Caco-2 (cell line): ENCODE measurements at regions of chr12 and their contacts with region 1.

Region 1: GRCh38 chr12:56224102-56224701 is at the start of gene NABP2:
- DNase-seq: peak; percentile 98
- H3K4me3 ChIP-seq: peak within 1 kb of the TSS; percentile 72
- H3K4me3 Mint-ChIP-seq: peak within 1 kb of the TSS; percentile 99
- H3K27ac Mint-ChIP-seq: peak within 1 kb of the TSS; percentile 98
- H3K4me1 ChIP-seq: peaks cover 6% of the 10 kb centered on the region
- H3K4me1 Mint-ChIP-seq: peaks cover under 1% of the 10 kb centered on the region
- H3K27me3 ChIP-seq: no peaks in the 10 kb centered on the region
- H3K27me3 Mint-ChIP-seq: no peaks in the 10 kb centered on the region
- CTCF ChIP-seq: peak; percentile 82 to 89
- total RNA-seq, gene NABP2: 32.1 and 37.7 TPM in 2 replicates

Region 2: DNA sequence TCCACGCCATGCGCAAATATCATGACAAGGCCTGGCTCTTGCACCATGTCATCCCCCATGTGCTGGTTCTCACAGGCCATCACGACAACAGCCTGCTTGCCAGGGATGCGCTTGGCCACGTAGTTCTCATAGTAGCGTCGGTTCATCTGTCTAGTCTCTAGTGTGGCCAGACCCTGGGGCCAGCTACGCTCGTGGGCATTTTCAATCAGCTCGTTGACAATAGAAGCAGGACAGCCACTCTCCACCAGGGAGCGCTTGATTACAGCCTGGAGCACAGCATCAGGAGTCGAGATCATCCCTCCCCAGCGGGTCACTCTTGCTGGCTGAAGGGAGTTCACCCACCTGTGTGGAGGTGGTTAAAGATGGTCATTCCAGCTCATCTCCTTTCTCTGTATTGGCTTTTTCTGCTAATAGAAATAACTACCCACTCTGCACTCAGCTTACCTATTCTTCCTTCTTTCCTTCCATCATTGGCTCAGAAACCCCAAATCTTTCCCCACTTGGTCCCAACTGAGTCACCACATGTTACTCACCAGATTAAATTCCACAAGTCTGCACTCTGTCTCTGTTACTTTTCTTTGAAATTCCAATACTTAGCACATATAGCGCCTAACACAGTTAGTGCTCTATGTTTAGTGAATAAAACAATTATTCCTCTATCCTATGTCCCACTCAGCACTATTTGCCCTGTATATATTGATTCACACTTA is 17.6 kb before region 1 on chr12:
- CTCF ChIA-PET with region 1: interaction called, 61 read pairs
- POLR2A ChIA-PET with region 1: interaction called, 19 read pairs
- intact Hi-C with region 1: loop called (anchors 1 kb)
- DNase-seq: peak; percentile 72 to 77
- H3K4me3 ChIP-seq: no peak overlapping the region
- H3K4me3 Mint-ChIP-seq: no peak overlapping the region
- H3K27ac Mint-ChIP-seq: no peak overlapping the region
- H3K4me1 ChIP-seq: no peaks in the 10 kb centered on the region
- H3K4me1 Mint-ChIP-seq: no peaks in the 10 kb centered on the region
- H3K27me3 ChIP-seq: no peaks in the 10 kb centered on the region
- H3K27me3 Mint-ChIP-seq: no peaks in the 10 kb centered on the region
- CTCF ChIP-seq: peak; percentile 61 to 78

Region 3: GRCh38 chr12:56258057-56258819 is 34.0 kb after region 1 on chr12 and contains the start of gene ANKRD52:
- CTCF ChIA-PET with region 1: interaction called, 20 read pairs
- POLR2A ChIA-PET with region 1: interaction called, 7 read pairs
- intact Hi-C with region 1: loop called (anchors 5 kb)
- DNase-seq: peak; percentile 50 to 88
- H3K4me3 ChIP-seq: peak within 1 kb of the TSS; percentile 72
- H3K4me3 Mint-ChIP-seq: peak within 1 kb of the TSS; percentile 74
- H3K27ac Mint-ChIP-seq: peak within 1 kb of the TSS; percentile 56
- H3K4me1 ChIP-seq: peaks cover 38% of the 10 kb centered on the region
- H3K4me1 Mint-ChIP-seq: peaks cover 30% of the 10 kb centered on the region
- H3K27me3 ChIP-seq: no peaks in the 10 kb centered on the region
- H3K27me3 Mint-ChIP-seq: no peaks in the 10 kb centered on the region
- CTCF ChIP-seq: peak; percentile 50 to 59
- total RNA-seq, gene ANKRD52: 34.6 and 46.3 TPM in 2 replicates

Region 4: DNA sequence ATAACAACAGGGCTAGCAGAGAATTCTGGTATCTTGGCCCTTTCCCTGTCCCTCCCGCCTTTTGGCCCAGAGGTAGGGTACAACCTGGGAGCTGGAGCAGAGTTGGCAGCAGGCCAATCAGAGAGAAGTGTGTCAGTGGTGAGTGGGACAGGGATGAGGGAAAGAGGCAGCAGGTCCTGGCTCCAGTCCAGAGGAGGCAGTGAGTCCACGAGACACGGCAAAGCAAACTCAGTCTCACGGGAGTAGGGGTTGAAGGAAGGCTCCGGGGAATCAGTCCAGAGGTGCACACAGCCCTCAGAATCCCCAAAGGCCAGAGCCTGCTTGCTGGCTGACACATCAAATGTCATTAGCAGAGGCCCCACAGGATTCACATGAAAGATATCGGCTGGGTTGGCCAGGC is 102.3 kb after region 1 on chr12:
- CTCF ChIA-PET with region 1: no interaction called
- POLR2A ChIA-PET with region 1: no interaction called
- intact Hi-C with region 1: no loop called
- DNase-seq: no peak
- H3K4me3 ChIP-seq: no peak overlapping the region
- H3K4me3 Mint-ChIP-seq: no peak overlapping the region
- H3K27ac Mint-ChIP-seq: no peak overlapping the region
- H3K4me1 ChIP-seq: peaks cover 8% of the 10 kb centered on the region; the same call in 1 of the 2 replicates
- H3K4me1 Mint-ChIP-seq: no peaks in the 10 kb centered on the region
- H3K27me3 ChIP-seq: no peaks in the 10 kb centered on the region
- H3K27me3 Mint-ChIP-seq: no peaks in the 10 kb centered on the region
- CTCF ChIP-seq: no peak

Region 5: GRCh38 chr12:56437430-56438176 is 213.4 kb after region 1 on chr12:
- CTCF ChIA-PET with region 1: no interaction called
- POLR2A ChIA-PET with region 1: no interaction called
- intact Hi-C with region 1: no loop called
- DNase-seq: no peak
- H3K4me3 ChIP-seq: no peak overlapping the region
- H3K4me3 Mint-ChIP-seq: no peak overlapping the region
- H3K27ac Mint-ChIP-seq: no peak overlapping the region
- H3K4me1 ChIP-seq: no peaks in the 10 kb centered on the region
- H3K4me1 Mint-ChIP-seq: peaks cover under 1% of the 10 kb centered on the region
- H3K27me3 ChIP-seq: no peaks in the 10 kb centered on the region
- H3K27me3 Mint-ChIP-seq: no peaks in the 10 kb centered on the region
- CTCF ChIP-seq: no peak